Right cardiac atrium (tissue), 5 donors: ENCODE measurements at regions of chr9 and their contacts with region 1.

Region 1: GRCh38 chr9:127347831-127348779 is 48.9 kb upstream of the SLC2A8 start:
- DNase-seq: no peak
- ATAC-seq: peak in 1 of 2 donors; percentile 81
- H3K4me3 ChIP-seq: no peak overlapping the region
- H3K27ac ChIP-seq: no peak overlapping the region
- H3K4me1 ChIP-seq: peaks cover 3% of the 10 kb centered on the region
- H3K27me3 ChIP-seq: no peaks in the 10 kb centered on the region

Region 2: GRCh38 chr9:126558051-126558665 is 789.9 kb before region 1 on chr9:
- intact Hi-C with region 1: no loop called
- DNase-seq: peak in 2 of 3 donors; percentile 74 to 78
- ATAC-seq: peak; percentile 53 to 63
- H3K4me3 ChIP-seq: no peak overlapping the region
- H3K27ac ChIP-seq: no peak overlapping the region
- H3K4me1 ChIP-seq: no peaks in the 10 kb centered on the region
- H3K27me3 ChIP-seq: no peaks in the 10 kb centered on the region

Region 3: GRCh38 chr9:127214421-127215267 is 133.5 kb before region 1 on chr9:
- intact Hi-C with region 1: loop called in 2 of 4 experiments (anchors 5 to 10 kb)
- DNase-seq: peak; percentile 44 to 73 (median 53)
- ATAC-seq: peak in 1 of 2 donors; percentile 34
- H3K4me3 ChIP-seq: no peak overlapping the region
- H3K27ac ChIP-seq: no peak overlapping the region
- H3K4me1 ChIP-seq: no peaks in the 10 kb centered on the region
- H3K27me3 ChIP-seq: no peaks in the 10 kb centered on the region

Region 4: GRCh38 chr9:127545196-127546124 is 197.4 kb after region 1 on chr9:
- intact Hi-C with region 1: no loop called
- DNase-seq: peak; percentile 58 to 85 (median 74)
- ATAC-seq: peak; percentile 41 to 50
- H3K4me3 ChIP-seq: no peak overlapping the region
- H3K27ac ChIP-seq: no peak overlapping the region
- H3K4me1 ChIP-seq: peaks cover 33% of the 10 kb centered on the region
- H3K27me3 ChIP-seq: no peaks in the 10 kb centered on the region